Activated CD8-positive, alpha-beta T cell treated with anti-CD3 and anti-CD28 coated beads for 36 hours (primary cell): ENCODE measurements at regions of chr19 and their contacts with region 1.

Region 1: DNA sequence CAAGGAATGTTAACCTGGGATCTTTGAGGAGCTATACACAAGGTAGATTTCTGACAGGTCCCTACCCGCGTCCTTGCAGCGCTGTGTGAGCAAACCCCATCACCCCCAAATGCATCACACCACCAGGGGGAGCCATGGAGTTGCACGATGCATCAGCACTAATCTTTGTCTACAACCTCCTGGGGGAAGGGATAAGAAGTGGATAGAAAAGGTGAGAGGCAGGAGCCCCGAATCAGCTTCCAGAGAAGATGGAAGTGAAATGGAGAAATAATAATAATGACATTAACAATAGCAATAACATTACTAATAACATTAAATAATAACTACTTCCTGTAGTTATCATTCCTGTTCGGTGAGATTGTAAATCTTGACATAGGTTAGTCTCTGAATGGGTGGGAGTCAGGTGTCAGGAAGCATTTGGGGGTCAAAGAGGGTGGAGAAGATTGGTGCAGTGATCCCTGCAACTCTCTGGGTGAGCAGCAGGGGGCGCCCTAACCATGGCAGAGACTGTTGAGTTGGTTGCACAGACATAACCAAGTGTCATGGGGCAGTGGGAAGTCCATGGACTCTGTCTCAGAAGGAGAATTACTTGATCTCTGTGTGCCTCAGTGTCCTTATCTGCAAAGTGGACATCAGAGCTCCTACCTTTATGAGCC is 16.5 kb downstream of the SIGLEC7 start:
- DNase-seq: peak; percentile 89
- ATAC-seq: peak; percentile 89
- H3K4me3 Mint-ChIP-seq: no peak overlapping the region
- H3K27ac Mint-ChIP-seq: no peak overlapping the region
- H3K4me1 Mint-ChIP-seq: peaks cover 6% of the 10 kb centered on the region
- H3K27me3 Mint-ChIP-seq: no peaks in the 10 kb centered on the region
- CTCF ChIP-seq: peak; percentile 99

Region 2: DNA sequence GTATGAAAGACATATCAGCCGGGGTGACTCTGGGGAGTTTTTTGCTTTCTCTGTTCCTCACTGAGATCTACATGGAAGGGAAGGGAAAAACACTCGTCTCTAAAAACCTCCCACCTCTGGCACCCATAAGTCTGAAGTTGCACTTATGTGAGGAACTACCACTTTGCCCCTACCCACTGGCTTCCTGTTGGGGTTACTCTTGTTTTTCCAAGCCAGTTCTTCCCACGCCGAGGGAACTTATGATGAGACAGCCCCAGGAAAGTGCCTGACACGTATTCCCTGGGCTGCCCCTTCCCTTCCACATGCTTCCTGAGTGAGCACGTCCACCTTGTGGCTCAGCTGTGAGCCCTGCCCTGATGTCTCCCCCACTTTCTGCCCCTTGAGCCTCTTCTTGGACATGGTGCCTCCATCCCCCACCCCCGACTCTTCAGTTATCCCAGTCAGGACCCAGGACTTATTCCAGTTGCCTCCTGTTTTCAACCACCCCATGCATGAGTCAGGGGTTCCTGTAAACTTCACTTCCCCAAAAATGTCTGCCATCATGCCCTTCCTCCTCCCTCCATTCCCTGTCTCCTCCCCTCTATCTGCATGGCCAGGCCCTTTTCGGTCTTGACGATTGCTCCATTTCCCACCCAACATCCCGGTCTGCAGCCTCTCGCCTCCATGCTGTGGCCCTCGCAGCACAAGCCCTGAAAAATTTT is 21.6 kb before region 1 on chr19:
- CTCF ChIA-PET with region 1: interaction called, 19 read pairs
- POLR2A ChIA-PET with region 1: no interaction called
- intact Hi-C with region 1: no loop called
- DNase-seq: no peak
- ATAC-seq: peak; percentile 18
- H3K4me3 Mint-ChIP-seq: no peak overlapping the region
- H3K27ac Mint-ChIP-seq: peak overlapping the region; percentile 50
- H3K4me1 Mint-ChIP-seq: peaks cover 31% of the 10 kb centered on the region
- H3K27me3 Mint-ChIP-seq: no peaks in the 10 kb centered on the region
- CTCF ChIP-seq: no peak

Region 3: DNA sequence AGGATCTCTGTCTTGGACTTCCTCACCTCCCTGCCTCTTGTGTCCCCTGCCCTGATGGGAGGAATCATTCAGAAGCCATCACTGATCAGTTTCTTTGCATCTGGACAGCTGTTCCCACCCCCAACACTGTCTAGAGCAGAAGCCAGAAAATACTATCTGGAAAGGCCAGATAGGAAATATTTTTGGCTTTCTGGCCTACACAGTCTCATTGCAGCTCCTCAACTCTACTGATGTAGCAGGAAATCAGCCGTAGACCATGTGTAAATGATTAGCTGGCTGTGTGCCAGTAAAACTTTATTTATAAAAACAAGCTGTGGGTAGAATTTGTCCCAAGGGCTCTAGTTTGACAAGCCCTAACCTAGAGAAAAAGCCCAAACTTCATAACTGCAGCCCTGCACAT is 10.9 kb before region 1 on chr19:
- CTCF ChIA-PET with region 1: interaction called, 17 read pairs
- POLR2A ChIA-PET with region 1: no interaction called
- intact Hi-C with region 1: no loop called
- DNase-seq: no peak
- ATAC-seq: no peak
- H3K4me3 Mint-ChIP-seq: no peak overlapping the region
- H3K27ac Mint-ChIP-seq: no peak overlapping the region
- H3K4me1 Mint-ChIP-seq: no peaks in the 10 kb centered on the region
- H3K27me3 Mint-ChIP-seq: no peaks in the 10 kb centered on the region
- CTCF ChIP-seq: no peak

Region 4: GRCh38 chr19:51168564-51169282 is 10.1 kb after region 1 on chr19:
- CTCF ChIA-PET with region 1: interaction called, 37 read pairs
- POLR2A ChIA-PET with region 1: no interaction called
- intact Hi-C with region 1: no loop called
- DNase-seq: no peak
- ATAC-seq: no peak
- H3K4me3 Mint-ChIP-seq: no peak overlapping the region
- H3K27ac Mint-ChIP-seq: no peak overlapping the region
- H3K4me1 Mint-ChIP-seq: peaks cover 27% of the 10 kb centered on the region
- H3K27me3 Mint-ChIP-seq: peaks cover 1% of the 10 kb centered on the region
- CTCF ChIP-seq: no peak

Region 5: DNA sequence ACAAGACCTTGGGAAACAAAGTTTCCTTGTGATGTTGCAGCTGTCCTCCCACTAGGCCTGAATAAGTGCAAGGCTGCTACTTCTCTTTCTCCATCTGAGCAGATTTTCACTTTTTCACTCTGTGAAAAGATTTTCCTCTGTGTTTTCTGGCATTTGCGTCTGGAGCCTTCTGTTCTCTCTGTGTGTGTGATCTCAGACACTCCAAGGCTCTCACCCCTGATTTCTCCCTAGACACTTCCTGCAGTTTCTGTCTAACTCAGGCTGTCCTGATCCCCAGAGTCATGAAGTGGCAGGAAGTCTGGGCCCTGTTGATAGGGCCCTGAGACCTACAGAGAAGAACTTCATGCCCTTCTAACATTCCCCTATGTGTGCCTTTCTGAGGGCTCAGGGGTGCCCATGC is 20.7 kb after region 1 on chr19:
- CTCF ChIA-PET with region 1: interaction called, 16 read pairs
- POLR2A ChIA-PET with region 1: no interaction called
- intact Hi-C with region 1: no loop called
- DNase-seq: no peak
- ATAC-seq: no peak
- H3K4me3 Mint-ChIP-seq: no peak overlapping the region
- H3K27ac Mint-ChIP-seq: no peak overlapping the region
- H3K4me1 Mint-ChIP-seq: no peaks in the 10 kb centered on the region
- H3K27me3 Mint-ChIP-seq: peaks cover 3% of the 10 kb centered on the region
- CTCF ChIP-seq: no peak

Region 6: DNA sequence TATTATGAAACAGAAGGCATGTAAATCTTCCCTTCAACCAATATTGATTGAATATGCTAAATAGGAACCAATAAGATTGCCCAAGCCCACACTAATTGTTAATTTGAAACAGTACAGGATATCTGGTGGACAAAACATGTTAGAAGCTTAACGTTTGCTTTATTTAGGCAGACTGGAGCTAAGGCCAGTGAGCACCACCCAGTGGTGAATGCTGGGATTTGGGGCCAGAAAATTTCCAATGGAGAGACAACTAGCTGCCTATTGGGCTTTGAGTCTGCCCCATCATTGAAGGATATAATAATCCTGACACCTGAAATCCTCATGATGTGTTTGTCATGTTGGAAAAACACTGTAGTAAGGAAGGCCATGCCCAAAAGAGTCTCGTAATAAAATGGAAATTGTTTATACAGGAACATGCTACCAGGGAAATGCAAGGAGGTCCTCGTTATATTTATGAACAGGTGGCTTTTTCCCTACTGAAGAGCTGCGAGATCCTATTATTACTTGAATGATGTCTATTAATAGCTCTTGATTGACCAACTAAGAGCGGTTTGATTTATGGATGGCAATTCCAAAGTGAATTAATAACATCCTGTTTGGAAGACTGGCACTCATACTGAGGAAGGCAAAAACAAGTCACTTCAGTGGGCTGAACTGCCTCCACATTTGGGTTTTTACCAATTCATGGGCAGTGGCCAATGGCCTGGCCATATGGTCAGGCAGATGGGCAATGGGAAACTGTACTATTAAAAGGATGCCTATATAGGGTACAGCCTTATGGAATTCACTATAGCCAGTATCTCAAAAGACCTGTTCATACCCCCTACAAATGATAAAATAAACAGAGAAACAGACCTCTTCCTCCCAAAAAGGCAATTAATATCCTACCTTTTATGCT is 101.0 kb after region 1 on chr19:
- CTCF ChIA-PET with region 1: interaction called, 25 read pairs
- POLR2A ChIA-PET with region 1: no interaction called
- intact Hi-C with region 1: loop called (anchors 5 kb)
- DNase-seq: peak; percentile 70
- ATAC-seq: peak; percentile 48
- H3K4me3 Mint-ChIP-seq: no peak overlapping the region
- H3K27ac Mint-ChIP-seq: no peak overlapping the region
- H3K4me1 Mint-ChIP-seq: peaks cover 9% of the 10 kb centered on the region
- H3K27me3 Mint-ChIP-seq: peaks cover 27% of the 10 kb centered on the region
- CTCF ChIP-seq: peak; percentile 84

Region 7: DNA sequence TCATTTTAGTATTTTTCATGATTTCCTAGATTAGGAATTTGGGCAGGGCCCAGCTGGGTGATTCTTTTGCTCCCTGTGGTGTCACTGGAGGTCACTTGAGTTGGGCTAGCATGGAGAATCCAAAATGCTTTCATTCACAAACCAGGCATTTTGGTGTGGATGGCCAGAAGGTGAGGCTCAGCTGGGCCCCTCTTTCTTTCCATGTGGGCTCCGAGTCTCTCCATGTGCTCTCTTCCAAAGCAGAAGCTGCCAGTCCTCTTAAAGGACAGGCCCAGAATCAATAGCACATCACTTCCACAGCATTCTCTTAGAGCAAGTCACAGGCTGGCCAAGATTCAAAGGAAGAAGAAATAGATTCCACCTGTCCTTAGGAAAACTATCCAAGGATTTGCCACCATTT is 131.0 kb after region 1 on chr19:
- CTCF ChIA-PET with region 1: no interaction called
- POLR2A ChIA-PET with region 1: no interaction called
- intact Hi-C with region 1: no loop called
- DNase-seq: no peak
- ATAC-seq: no peak
- H3K4me3 Mint-ChIP-seq: no peak overlapping the region
- H3K27ac Mint-ChIP-seq: no peak overlapping the region
- H3K4me1 Mint-ChIP-seq: no peaks in the 10 kb centered on the region
- H3K27me3 Mint-ChIP-seq: peaks cover 3% of the 10 kb centered on the region
- CTCF ChIP-seq: no peak